Heart left ventricle (tissue), 16 donors: ENCODE measurements at regions of chr12 and their contacts with region 1.

Region 1: DNA sequence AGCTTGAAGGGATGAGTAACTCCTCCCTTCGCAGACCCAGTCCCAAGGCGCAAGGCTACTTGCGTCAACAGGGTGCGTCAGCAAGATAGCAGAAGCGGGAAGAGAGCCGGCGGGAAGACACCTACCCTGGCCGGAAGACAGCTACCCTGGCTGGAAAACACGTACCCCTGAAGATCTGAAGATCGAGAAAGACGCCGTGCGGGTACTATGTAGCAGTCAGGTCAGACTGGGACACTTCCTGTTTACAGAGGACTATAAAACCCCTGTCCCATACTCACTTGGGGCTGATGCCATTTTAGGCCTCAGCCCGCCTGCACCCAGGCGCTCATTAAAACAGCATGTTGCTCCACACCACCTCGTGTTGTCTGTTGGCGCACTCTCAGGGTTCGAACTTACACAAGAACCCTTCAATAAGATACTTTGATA is 80.9 kb downstream of the ABCD2 start:
- DNase-seq: no peak
- ATAC-seq: no peak
- H3K4me3 ChIP-seq: no peak overlapping the region
- H3K27ac ChIP-seq: no peak overlapping the region
- H3K4me1 ChIP-seq: no peaks in the 10 kb centered on the region
- H3K27me3 ChIP-seq: no peaks in the 10 kb centered on the region
- CTCF ChIP-seq: no peak
- POLR2A ChIP-seq: no peak

Region 2: DNA sequence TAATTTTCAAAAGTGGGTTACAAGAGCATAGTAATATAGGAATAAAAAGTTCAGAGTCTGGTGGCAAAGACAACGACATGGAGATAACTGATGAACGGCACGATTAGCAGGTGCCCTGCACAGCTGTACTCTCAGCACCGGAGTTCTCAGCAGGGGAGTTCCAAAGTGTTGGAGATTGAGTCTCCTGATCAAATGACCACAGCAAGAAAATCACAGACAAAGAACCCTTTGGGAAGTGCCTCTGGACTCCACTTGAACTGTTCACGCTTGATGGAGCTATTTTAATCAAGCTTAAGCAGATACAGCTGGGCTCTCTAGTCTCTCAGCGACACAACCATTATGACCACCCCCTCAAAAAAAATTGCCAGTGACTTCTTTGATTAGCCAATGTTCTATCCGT is 1069.0 kb before region 1 on chr12:
- intact Hi-C with region 1: no loop called
- DNase-seq: no peak
- ATAC-seq: no peak
- H3K4me3 ChIP-seq: no peak overlapping the region
- H3K27ac ChIP-seq: no peak overlapping the region
- H3K4me1 ChIP-seq: no peaks in the 10 kb centered on the region
- H3K27me3 ChIP-seq: no peaks in the 10 kb centered on the region
- CTCF ChIP-seq: no peak
- POLR2A ChIP-seq: no peak

Region 3: DNA sequence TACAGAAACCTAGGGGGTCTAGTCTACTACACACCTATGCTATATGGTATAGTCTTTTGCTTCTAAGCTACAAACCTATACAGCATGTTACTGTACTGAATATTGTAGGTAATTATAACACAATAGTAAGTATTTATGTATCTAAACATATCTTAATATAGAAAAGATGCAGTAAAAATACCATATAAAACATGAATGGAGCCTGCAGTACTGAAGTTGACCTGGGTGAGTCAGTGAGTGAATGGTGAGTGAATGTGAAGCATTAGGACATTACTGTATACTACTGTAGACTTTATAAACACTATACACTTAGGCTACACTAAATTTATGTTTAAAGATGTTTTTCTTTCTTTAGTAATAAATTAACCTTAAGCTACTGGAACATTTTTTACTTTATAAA is 94.0 kb after region 1 on chr12:
- intact Hi-C with region 1: no loop called
- DNase-seq: no peak
- ATAC-seq: no peak
- H3K4me3 ChIP-seq: no peak overlapping the region
- H3K27ac ChIP-seq: no peak overlapping the region
- H3K4me1 ChIP-seq: peaks cover 0 to 13% (median 0%) of the 10 kb centered on the region in 12 donors
- H3K27me3 ChIP-seq: no peaks in the 10 kb centered on the region
- CTCF ChIP-seq: peak in 1 of 12 donors; percentile 21
- POLR2A ChIP-seq: no peak

Region 4: DNA sequence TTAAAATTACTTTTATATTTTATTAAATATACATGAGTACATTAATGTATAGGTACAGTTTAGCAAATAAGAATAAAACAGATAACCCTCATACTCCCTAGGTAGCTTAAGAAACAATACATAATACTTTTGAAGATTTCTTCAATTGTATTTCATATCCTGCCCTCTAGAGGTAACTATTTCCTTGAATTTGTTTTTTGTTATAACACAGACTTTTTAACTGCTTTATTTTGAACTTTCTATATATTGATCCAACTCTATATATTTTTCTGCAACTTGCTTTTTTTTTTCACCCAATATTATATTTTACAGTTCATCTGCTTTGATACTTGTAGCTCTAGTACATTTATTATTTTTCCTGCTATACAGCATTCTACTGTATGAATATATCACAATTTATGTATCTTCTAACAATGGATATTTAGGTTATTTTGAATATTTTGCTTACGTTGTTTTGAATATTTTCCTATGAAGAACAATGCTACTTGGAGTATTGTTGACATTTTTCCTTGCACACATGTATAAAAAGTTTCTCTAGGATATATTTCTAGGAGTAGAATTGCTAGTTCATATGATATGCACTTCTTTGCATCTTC is 153.7 kb after region 1 on chr12:
- intact Hi-C with region 1: loop called in 1 of 10 experiments (anchors 10 kb)
- DNase-seq: no peak
- ATAC-seq: no peak
- H3K4me3 ChIP-seq: no peak overlapping the region
- H3K27ac ChIP-seq: no peak overlapping the region
- H3K4me1 ChIP-seq: no peaks in the 10 kb centered on the region
- H3K27me3 ChIP-seq: no peaks in the 10 kb centered on the region
- CTCF ChIP-seq: peak in 10 of 12 donors; percentile 22 to 55 (median 44)
- POLR2A ChIP-seq: no peak

Region 5: GRCh38 chr12:39712334-39712733 is 173.6 kb after region 1 on chr12:
- intact Hi-C with region 1: no loop called
- DNase-seq: no peak
- ATAC-seq: no peak
- H3K4me3 ChIP-seq: no peak overlapping the region
- H3K27ac ChIP-seq: no peak overlapping the region
- H3K4me1 ChIP-seq: no peaks in the 10 kb centered on the region
- H3K27me3 ChIP-seq: no peaks in the 10 kb centered on the region
- CTCF ChIP-seq: no peak
- POLR2A ChIP-seq: no peak